Endothelial cell of umbilical vein (primary cell): ENCODE measurements at regions of chr6 and their contacts with region 1.

Region 1: GRCh38 chr6:33585403-33586107 is 5.5 kb upstream of the BAK1 start:
- DNase-seq: peak; percentile 75
- H3K4me3 ChIP-seq: no peak overlapping the region
- H3K27ac ChIP-seq: no peak overlapping the region
- H3K4me1 ChIP-seq: peaks cover 18% of the 10 kb centered on the region
- H3K27me3 ChIP-seq: no peaks in the 10 kb centered on the region
- CTCF ChIP-seq: peak; percentile 89 to 96
- POLR2A ChIP-seq: no peak

Region 2: GRCh38 chr6:33607784-33608161 is 22.2 kb after region 1 on chr6:
- CTCF ChIA-PET with region 1: interaction called, 21 read pairs
- POLR2A ChIA-PET with region 1: no interaction called
- dilution Hi-C with region 1: no loop called
- intact Hi-C with region 1: loop called (anchors 2 kb)
- DNase-seq: no peak
- H3K4me3 ChIP-seq: no peak overlapping the region
- H3K27ac ChIP-seq: no peak overlapping the region
- H3K4me1 ChIP-seq: peaks cover 14% of the 10 kb centered on the region
- H3K27me3 ChIP-seq: no peaks in the 10 kb centered on the region
- CTCF ChIP-seq: peak in 1 of 2 donors; percentile 18
- POLR2A ChIP-seq: no peak

Region 3: GRCh38 chr6:33633462-33634158 is 48.1 kb after region 1 on chr6:
- CTCF ChIA-PET with region 1: interaction called, 48 read pairs
- POLR2A ChIA-PET with region 1: no interaction called
- dilution Hi-C with region 1: no loop called
- intact Hi-C with region 1: loop called (anchors 1 kb)
- DNase-seq: peak; percentile 66
- H3K4me3 ChIP-seq: peak overlapping the region; percentile 33 to 68 (median 35)
- H3K27ac ChIP-seq: no peak overlapping the region
- H3K4me1 ChIP-seq: peaks cover 23% of the 10 kb centered on the region
- H3K27me3 ChIP-seq: no peaks in the 10 kb centered on the region
- CTCF ChIP-seq: no peak
- POLR2A ChIP-seq: peak; percentile 39

Region 4: GRCh38 chr6:33700391-33701050 is 115.0 kb after region 1 on chr6:
- CTCF ChIA-PET with region 1: interaction called, 97 read pairs
- POLR2A ChIA-PET with region 1: interaction called, 5 read pairs
- dilution Hi-C with region 1: no loop called
- intact Hi-C with region 1: loop called (anchors 1 kb)
- DNase-seq: peak; percentile 81
- H3K4me3 ChIP-seq: no peak overlapping the region
- H3K27ac ChIP-seq: peak overlapping the region; percentile 46
- H3K4me1 ChIP-seq: peaks cover 45% of the 10 kb centered on the region
- H3K27me3 ChIP-seq: no peaks in the 10 kb centered on the region
- CTCF ChIP-seq: peak; percentile 79 to 92
- POLR2A ChIP-seq: no peak

Region 5: DNA sequence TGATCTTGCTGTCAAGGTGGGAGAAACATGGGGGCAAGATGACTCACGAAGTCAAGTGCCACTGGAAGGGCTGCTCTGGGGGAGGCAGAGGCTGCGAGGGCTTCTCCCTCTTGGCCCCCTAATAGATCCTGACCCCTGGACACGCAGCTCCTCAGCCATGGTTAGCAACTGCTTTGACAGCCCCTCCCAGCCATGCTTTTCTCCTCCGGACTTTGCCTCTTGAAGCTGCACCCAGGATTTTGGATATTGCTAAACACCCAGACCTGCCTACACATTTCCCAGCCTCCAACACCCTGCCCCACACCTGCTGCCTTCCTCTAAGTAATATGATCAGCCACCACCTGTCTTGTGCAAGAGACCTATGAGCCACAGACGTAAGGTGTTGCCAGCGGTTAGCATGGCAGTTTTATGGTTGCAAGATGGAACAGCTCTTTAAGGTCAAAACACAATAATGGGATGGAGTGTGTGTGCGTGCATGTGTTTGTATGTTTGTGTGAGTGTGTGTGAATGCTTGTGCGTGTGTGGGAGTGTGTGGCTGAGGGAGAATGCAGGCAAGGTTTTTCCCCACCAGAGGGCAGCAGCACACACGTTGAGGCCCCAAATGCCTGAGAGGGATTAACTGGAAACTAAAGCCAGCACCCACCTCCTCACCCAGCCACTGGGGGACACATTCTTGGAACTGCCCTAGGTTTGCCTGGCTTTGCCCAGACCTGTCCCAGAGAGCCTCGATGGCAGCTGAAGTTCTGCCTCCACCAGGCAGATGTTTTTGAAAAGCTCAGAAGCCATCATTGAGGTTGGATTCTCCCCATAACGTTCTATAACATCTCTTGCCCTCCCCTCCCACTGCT is 158.7 kb after region 1 on chr6:
- CTCF ChIA-PET with region 1: interaction called, 7 read pairs
- POLR2A ChIA-PET with region 1: no interaction called
- dilution Hi-C with region 1: no loop called
- intact Hi-C with region 1: loop called (anchors 1 kb)
- DNase-seq: peak; percentile 72
- H3K4me3 ChIP-seq: no peak overlapping the region
- H3K27ac ChIP-seq: no peak overlapping the region
- H3K4me1 ChIP-seq: no peaks in the 10 kb centered on the region
- H3K27me3 ChIP-seq: peaks cover 4 to 9% of the 10 kb centered on the region in 2 experiments
- CTCF ChIP-seq: peak; percentile 90 to 93
- POLR2A ChIP-seq: no peak